Activated CD8-positive, alpha-beta T cell treated with anti-CD3 and anti-CD28 coated beads, Interleukin-2, amount 10 ng/mL, durations not matched to agents 7 days and 5 days (primary cell): ENCODE measurements at regions of chr17 and their contacts with region 1.

Region 1: GRCh38 chr17:65137021-65137991 is at the start of gene RGS9:
- DNase-seq: peak; percentile 86
- ATAC-seq: peak; percentile 99
- H3K4me3 Mint-ChIP-seq: peak within 1 kb of the TSS; percentile 70
- H3K27ac Mint-ChIP-seq: peak within 1 kb of the TSS; percentile 50
- H3K4me1 Mint-ChIP-seq: peaks cover 36% of the 10 kb centered on the region
- H3K27me3 Mint-ChIP-seq: peaks cover 28% of the 10 kb centered on the region
- total RNA-seq, gene RGS9: 4.8 to 5.7 TPM

Region 2: DNA sequence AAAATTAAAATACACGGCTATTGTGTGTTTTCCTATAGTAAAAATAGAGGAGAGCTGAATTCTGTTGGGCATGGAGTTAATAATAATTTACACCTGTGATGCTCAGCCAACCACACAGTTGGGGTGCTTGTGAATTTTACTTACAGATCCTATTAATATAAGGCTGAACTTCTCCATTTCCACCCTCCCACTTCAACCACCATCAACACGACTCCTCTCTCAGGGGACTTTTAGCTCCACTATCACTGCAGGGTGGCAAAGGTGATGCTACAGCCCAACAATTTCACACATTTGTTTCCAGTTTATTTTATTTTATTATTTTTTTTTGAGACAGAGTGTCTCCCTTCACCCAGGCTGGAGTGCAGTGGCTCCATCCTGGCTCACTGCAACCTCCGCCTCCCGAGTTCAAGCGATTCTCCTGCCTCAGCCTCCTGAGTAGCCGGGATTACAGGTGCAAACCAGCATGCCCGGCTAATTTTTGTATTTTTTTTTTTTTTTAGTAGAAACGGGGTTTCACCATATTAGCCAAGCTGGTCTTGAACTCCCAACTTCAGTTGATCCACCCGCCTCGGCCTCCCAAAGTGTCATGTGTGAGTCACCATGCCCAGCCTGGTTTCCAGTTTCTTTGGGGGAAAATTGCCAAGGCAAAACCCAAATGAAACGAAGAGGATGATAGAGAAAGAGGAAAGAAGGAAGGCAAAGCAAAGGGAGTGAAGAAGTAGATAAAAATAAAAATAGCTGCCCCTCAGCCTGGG is 138.7 kb before region 1 on chr17:
- CTCF ChIA-PET with region 1: no interaction called
- POLR2A ChIA-PET with region 1: no interaction called
- DNase-seq: no peak
- ATAC-seq: no peak
- H3K4me3 Mint-ChIP-seq: no peak overlapping the region
- H3K27ac Mint-ChIP-seq: no peak overlapping the region
- H3K4me1 Mint-ChIP-seq: no peaks in the 10 kb centered on the region
- H3K27me3 Mint-ChIP-seq: no peaks in the 10 kb centered on the region

Region 3: GRCh38 chr17:65047942-65048341 is 89.4 kb before region 1 on chr17:
- CTCF ChIA-PET with region 1: no interaction called
- POLR2A ChIA-PET with region 1: no interaction called
- DNase-seq: no peak
- ATAC-seq: no peak
- H3K4me3 Mint-ChIP-seq: no peak overlapping the region
- H3K27ac Mint-ChIP-seq: no peak overlapping the region
- H3K4me1 Mint-ChIP-seq: peaks cover 70% of the 10 kb centered on the region
- H3K27me3 Mint-ChIP-seq: no peaks in the 10 kb centered on the region

Region 4: DNA sequence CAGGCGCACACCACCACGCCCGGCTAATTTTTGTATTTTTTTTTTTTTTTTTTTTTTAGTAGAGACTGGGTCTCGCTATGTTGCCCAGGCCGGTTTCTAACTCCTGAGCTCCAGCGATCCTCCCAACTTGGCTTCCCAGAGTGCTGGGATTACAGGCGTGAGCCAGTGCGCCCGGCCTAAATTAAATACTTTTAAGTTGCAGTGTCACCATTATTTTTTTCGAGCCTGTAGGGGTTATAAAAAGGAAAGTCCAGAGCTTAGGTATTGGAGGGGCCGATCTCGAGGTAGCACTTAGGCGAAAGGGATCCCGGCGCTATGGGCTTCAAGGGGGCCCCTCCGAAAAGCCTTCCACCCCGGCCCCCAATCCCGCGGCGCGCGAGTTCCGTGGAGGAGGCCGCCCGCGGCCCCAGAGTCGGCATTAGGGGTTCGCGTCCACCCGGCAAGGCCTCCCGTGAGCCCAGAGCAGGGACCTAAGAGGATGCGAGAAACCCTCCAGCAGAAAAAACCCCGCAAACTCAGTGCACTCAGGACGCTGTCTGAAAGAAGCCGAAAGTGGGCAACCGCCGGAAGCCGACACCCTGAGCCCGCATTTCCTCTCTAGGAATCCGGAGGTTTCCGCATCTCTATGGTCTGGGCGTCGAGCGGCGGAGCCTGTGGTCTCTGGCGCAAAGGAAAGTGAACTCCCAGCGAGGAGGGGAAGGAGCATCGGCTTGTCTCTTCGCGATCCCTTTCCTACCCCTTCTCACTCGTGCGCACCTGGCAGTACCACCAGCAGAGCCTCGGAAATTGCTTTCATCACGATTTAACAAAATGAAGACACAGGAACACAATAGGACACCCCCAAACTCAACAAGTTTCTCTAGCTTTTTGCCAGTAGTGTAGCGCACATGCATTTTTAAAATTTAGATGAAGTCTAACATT is 14.2 kb before region 1 on chr17:
- CTCF ChIA-PET with region 1: interaction called, 24 read pairs
- POLR2A ChIA-PET with region 1: interaction called, 3 read pairs
- DNase-seq: peak; percentile 90
- ATAC-seq: peak; percentile 82
- H3K4me3 Mint-ChIP-seq: peak overlapping the region; percentile 78
- H3K27ac Mint-ChIP-seq: peak overlapping the region; percentile 90
- H3K4me1 Mint-ChIP-seq: peaks cover 23% of the 10 kb centered on the region
- H3K27me3 Mint-ChIP-seq: peaks cover 9% of the 10 kb centered on the region

Region 5: GRCh38 chr17:65154770-65155621 is 17.7 kb after region 1 on chr17:
- CTCF ChIA-PET with region 1: interaction called, 12 read pairs
- POLR2A ChIA-PET with region 1: no interaction called
- DNase-seq: no peak
- ATAC-seq: no peak
- H3K4me3 Mint-ChIP-seq: no peak overlapping the region
- H3K27ac Mint-ChIP-seq: no peak overlapping the region
- H3K4me1 Mint-ChIP-seq: peaks cover 14% of the 10 kb centered on the region
- H3K27me3 Mint-ChIP-seq: peaks cover 12% of the 10 kb centered on the region

Region 6: GRCh38 chr17:65181237-65182061 is 44.1 kb after region 1 on chr17:
- CTCF ChIA-PET with region 1: interaction called, 14 read pairs
- POLR2A ChIA-PET with region 1: interaction called, 3 read pairs
- DNase-seq: no peak
- ATAC-seq: peak; percentile 18
- H3K4me3 Mint-ChIP-seq: no peak overlapping the region
- H3K27ac Mint-ChIP-seq: peak overlapping the region; percentile 82
- H3K4me1 Mint-ChIP-seq: peaks cover 75% of the 10 kb centered on the region
- H3K27me3 Mint-ChIP-seq: no peaks in the 10 kb centered on the region

Region 7: DNA sequence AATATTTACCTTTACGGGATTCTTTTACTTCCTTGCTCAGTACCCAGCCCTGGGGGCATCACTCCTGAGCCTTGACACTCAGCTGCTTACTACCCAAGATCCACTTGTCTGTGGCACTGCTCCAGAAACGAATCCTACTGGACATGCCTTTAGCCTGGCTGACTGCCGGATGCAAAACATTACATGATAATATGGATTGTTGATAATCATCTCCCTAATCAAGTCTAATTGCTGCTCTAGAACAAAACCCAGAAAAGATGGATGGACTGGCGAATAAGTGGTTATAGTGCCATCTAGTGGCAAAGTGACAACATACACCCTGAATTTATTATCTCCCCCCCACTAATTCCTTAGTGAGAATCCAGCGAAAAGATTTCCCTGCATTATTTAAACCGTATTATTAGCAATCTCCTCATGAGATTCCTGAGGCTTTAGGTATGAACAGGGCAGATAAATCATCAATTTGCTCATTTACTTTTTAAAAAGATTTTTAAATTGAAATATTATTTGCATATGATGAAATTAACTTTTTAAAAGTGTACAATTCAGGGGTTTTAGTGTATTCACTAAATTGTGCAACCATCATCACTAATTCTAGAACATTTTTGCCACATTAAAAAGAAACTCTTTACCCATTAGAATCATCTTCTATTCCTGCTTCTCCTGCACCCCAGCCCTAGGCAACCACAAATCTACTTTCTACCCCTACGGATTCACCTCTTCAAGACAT is 61.5 kb after region 1 on chr17:
- CTCF ChIA-PET with region 1: interaction called, 34 read pairs
- POLR2A ChIA-PET with region 1: no interaction called
- DNase-seq: no peak
- ATAC-seq: peak; percentile 70
- H3K4me3 Mint-ChIP-seq: no peak overlapping the region
- H3K27ac Mint-ChIP-seq: no peak overlapping the region
- H3K4me1 Mint-ChIP-seq: peaks cover 6% of the 10 kb centered on the region
- H3K27me3 Mint-ChIP-seq: peaks cover 4% of the 10 kb centered on the region

Region 8: GRCh38 chr17:65287040-65287439 is 149.7 kb after region 1 on chr17:
- CTCF ChIA-PET with region 1: no interaction called
- POLR2A ChIA-PET with region 1: no interaction called
- DNase-seq: no peak
- ATAC-seq: no peak
- H3K4me3 Mint-ChIP-seq: no peak overlapping the region
- H3K27ac Mint-ChIP-seq: no peak overlapping the region
- H3K4me1 Mint-ChIP-seq: no peaks in the 10 kb centered on the region
- H3K27me3 Mint-ChIP-seq: peaks cover 5% of the 10 kb centered on the region

Region 9: DNA sequence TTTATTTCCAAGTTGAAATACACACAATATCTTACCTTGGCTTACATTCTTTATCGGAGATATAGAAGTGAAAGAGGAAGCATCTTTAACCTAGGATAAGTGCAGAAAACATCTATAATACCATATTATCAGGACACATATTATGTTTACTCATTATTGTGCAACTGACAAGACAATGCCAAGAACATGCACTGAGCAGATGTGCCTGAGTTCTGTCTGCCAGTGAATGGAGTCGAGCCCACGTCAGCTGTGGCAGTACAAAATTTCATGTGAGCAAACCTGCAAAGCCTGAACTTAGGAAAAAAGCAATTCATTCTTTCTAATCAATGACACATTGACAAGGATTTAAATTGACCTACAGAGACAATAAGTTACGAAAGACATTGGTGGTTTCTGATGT is 269.7 kb after region 1 on chr17:
- CTCF ChIA-PET with region 1: no interaction called
- POLR2A ChIA-PET with region 1: no interaction called
- DNase-seq: no peak
- ATAC-seq: no peak
- H3K4me3 Mint-ChIP-seq: no peak overlapping the region
- H3K27ac Mint-ChIP-seq: no peak overlapping the region
- H3K4me1 Mint-ChIP-seq: no peaks in the 10 kb centered on the region
- H3K27me3 Mint-ChIP-seq: no peaks in the 10 kb centered on the region